Activated CD8-positive, alpha-beta T cell treated with anti-CD3 and anti-CD28 coated beads, Interleukin-2, amount 10 ng/mL, durations not matched to agents 7 days and 5 days (primary cell): ENCODE measurements at regions of chr5 and their contacts with region 1.

Region 1: GRCh38 chr5:68287976-68288706 is 72.6 kb downstream of the PIK3R1 start:
- DNase-seq: peak; percentile 76
- ATAC-seq: peak; percentile 89
- H3K4me3 Mint-ChIP-seq: peak overlapping the region; percentile 84
- H3K27ac Mint-ChIP-seq: peak overlapping the region; percentile 96
- H3K4me1 Mint-ChIP-seq: peaks cover 78% of the 10 kb centered on the region
- H3K27me3 Mint-ChIP-seq: no peaks in the 10 kb centered on the region

Region 2: GRCh38 chr5:68272289-68272688 is 15.9 kb before region 1 on chr5:
- CTCF ChIA-PET with region 1: interaction called, 15 read pairs
- POLR2A ChIA-PET with region 1: no interaction called
- DNase-seq: no peak
- ATAC-seq: no peak
- H3K4me3 Mint-ChIP-seq: no peak overlapping the region
- H3K27ac Mint-ChIP-seq: no peak overlapping the region
- H3K4me1 Mint-ChIP-seq: peaks cover 66% of the 10 kb centered on the region
- H3K27me3 Mint-ChIP-seq: no peaks in the 10 kb centered on the region

Region 3: GRCh38 chr5:68378204-68378824 is 90.2 kb after region 1 on chr5:
- CTCF ChIA-PET with region 1: interaction called, 25 read pairs
- POLR2A ChIA-PET with region 1: interaction called, 4 read pairs
- DNase-seq: peak; percentile 75
- ATAC-seq: peak; percentile 86
- H3K4me3 Mint-ChIP-seq: peak overlapping the region; percentile 58
- H3K27ac Mint-ChIP-seq: peak overlapping the region; percentile 93
- H3K4me1 Mint-ChIP-seq: peaks cover 77% of the 10 kb centered on the region
- H3K27me3 Mint-ChIP-seq: peaks cover 3% of the 10 kb centered on the region

Region 4: DNA sequence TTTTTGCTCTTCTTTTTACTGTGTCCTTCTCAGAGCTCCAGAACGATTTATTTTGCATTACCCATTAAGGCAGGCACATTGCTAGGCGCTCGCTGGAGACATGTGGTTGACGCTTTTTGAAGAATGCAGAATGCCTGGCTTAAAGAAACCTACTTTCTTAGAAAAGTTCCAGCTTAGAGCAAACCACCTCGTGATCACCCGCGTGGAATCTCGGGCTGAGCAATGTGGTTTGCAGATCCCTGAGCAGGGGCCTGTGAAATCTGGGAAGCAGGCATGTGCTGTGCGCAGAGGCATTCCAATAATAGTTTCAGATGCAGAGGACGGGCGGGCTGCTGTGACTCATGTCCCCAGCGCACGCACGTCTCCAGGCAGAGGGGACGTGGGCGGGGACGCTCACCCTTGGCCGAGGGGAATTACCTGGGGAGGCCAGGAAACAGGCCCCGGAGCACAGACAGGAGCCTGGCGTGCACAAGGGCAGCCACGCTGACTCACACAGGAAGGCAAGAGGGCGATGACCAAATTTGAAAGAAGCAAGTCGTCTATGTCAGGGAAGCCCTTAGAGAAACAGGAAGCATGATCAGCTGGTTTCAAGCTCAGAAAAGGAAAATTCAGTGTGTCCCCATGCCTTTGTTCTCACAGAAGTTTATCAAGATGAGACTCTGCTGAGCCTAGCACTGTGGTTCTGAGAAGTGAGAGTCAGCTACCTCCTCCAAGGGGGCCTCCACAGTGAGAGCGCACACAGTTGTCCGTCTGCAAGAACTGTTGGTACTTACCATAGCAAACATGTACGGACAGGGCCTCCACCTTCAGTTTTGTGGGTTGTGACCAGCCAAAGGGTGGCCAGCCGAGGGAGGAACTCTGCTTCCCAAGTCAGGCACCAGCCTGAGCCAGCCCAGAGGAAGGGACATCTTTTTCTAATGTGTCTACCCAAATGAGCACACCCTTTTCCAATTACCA is 146.1 kb after region 1 on chr5:
- CTCF ChIA-PET with region 1: interaction called, 23 read pairs
- POLR2A ChIA-PET with region 1: interaction called, 4 read pairs
- DNase-seq: peak; percentile 91
- ATAC-seq: peak; percentile 98
- H3K4me3 Mint-ChIP-seq: peak overlapping the region; percentile 26
- H3K27ac Mint-ChIP-seq: peak overlapping the region; percentile 80
- H3K4me1 Mint-ChIP-seq: peaks cover 49% of the 10 kb centered on the region
- H3K27me3 Mint-ChIP-seq: peaks cover 6% of the 10 kb centered on the region

Region 5: DNA sequence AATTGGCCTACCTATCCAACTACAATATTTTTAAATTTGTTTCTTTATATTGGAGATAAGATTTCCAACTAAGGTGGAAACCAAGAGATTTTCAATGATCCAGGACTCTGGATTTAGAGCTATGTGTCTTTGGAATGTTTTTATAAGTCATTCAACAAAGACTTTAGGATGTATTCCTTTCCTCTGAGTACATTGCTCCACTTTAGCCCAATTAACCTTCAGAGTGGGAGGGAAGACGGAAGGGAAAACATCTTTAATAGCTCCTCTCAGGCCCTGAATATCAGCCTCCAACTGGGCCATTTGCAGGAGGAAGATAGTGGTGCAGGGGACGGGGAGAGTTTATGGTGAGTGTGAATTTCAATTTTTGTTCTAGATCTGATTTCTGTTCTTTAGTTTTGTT is 166.6 kb after region 1 on chr5:
- CTCF ChIA-PET with region 1: interaction called, 122 read pairs
- POLR2A ChIA-PET with region 1: interaction called, 3 read pairs
- DNase-seq: no peak
- ATAC-seq: no peak
- H3K4me3 Mint-ChIP-seq: no peak overlapping the region
- H3K27ac Mint-ChIP-seq: no peak overlapping the region
- H3K4me1 Mint-ChIP-seq: peaks cover 19% of the 10 kb centered on the region
- H3K27me3 Mint-ChIP-seq: peaks cover 2% of the 10 kb centered on the region